Caco-2 (cell line): ENCODE measurements at regions of chr19 and their contacts with region 1.

Region 1: DNA sequence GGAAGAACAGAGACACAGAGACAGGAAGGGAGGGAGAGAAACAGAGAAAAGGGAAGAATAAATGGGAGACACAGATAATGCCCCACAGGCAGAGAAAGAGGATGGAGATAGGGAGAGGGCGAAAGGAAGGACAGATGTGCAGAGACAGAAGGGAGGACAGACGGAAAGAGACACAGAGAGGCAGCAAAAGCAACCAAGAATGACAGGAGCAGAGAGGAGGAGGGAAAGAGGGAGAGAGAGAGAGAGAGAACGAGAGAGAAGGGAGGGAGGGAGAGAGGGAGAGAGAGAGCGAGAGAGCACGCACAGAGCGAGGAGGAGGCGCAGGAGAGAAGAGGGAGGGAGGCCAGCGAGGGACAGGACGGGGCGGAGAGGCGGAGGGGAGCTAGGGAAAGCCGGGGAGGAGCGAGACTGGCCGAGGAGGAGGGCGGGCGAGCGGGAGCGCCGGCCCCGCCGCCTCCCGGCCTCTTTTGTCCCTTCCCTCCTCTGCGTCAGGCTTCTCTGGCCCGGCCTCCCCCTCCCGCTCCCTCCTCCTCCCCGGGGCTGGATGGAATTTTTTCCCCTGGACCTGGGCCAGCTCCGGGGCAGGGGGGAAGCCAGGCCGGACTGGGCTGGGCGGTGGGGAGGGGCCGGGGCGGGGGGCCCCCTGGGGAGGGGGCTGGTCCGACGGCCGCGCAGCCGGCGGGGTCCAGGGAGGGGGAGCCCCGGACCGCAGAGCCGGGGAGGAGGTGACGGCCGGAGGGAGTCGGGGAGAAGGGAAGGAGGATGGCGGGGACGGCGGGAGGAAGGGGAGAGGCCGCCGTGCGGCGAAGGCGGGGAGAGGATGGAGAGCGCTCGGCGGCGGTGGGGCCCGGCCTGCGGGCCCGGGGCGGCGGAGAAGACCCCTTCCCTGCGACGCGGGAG is 4.2 kb upstream of the SPACA6 start:
- DNase-seq: peak; percentile 74 to 77
- H3K4me3 ChIP-seq: peak overlapping the region; percentile 51
- H3K4me3 Mint-ChIP-seq: peak overlapping the region; percentile 84
- H3K27ac Mint-ChIP-seq: peak overlapping the region; percentile 16
- H3K4me1 ChIP-seq: peaks cover 20% of the 10 kb centered on the region
- H3K4me1 Mint-ChIP-seq: peaks cover 27% of the 10 kb centered on the region
- H3K27me3 ChIP-seq: no peaks in the 10 kb centered on the region
- H3K27me3 Mint-ChIP-seq: no peaks in the 10 kb centered on the region
- CTCF ChIP-seq: no peak

Region 2: DNA sequence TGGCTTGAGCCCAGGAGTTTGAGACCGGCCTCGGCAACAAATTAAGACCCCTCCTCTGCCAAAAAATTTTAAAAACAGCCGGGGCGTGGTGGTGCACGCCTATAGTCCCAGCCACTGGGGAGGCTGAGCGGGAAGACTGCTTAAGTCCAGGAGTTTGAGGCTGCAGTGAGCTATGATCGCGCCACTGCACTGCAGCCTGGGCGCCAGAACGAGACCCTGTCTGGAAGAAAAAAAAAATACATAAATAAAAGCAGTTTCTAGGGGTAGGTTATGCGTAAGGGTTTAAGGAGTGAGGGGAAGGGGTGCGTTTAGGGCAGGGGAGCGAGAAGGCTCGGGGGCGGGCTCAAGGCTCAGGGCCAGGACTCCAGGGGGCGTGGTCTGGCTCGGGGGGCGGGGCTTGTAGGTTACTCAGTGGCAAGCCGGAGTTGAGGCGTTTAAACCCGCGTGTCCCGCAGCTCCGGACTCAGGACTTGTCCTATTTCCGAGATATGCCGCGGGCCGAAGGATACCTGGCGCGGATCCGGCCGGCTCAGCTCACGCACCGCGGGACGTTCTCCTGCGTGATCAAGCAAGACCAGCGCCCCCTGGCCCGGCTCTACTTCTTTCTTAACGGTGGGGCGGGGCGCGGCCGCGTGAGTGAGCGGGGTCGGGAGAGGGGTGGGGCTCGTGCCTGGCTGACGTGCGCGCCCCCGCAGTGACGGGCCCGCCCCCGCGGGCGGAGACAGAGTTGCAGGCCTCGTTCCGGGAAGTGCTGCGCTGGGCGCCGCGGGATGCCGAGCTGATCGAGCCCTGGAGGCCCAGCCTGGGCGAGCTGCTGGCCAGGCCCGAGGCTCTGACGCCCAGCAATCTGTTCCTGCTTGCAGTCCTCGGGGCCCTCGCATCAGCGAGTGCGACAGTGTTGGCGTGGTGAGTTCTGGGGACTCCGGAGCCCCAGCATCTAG is 14.9 kb after region 1 on chr19:
- CTCF ChIA-PET with region 1: interaction called, 7 read pairs
- POLR2A ChIA-PET with region 1: no interaction called
- intact Hi-C with region 1: loop called (anchors 1 kb)
- DNase-seq: peak; percentile 96
- H3K4me3 ChIP-seq: peak overlapping the region; percentile 54
- H3K4me3 Mint-ChIP-seq: peak overlapping the region; percentile 85
- H3K27ac Mint-ChIP-seq: peak overlapping the region; percentile 90
- H3K4me1 ChIP-seq: peaks cover 12% of the 10 kb centered on the region; the same call in 1 of the 2 replicates
- H3K4me1 Mint-ChIP-seq: peaks cover 12% of the 10 kb centered on the region
- H3K27me3 ChIP-seq: no peaks in the 10 kb centered on the region
- H3K27me3 Mint-ChIP-seq: no peaks in the 10 kb centered on the region
- CTCF ChIP-seq: peak; percentile 45 to 54

Region 3: DNA sequence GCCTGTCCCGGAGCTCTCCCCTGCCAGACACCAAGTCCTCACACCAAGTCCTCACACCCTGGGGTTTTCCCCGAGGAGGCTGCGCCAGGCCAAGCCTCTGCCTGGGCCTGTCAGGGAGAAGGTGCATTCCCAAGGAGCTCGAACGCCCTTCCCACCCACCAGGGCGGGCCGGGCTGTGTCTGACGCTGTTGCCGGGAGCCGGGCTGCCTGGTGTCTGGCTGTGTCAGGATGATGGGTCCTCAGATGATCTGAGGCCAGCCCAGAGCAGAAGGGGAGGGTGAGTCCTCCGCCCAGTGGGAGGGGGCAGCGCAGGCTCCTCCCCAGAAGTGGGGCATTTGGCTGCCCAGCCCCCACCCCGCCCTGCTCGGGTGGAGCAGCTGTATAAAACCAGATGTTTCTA is 37.1 kb after region 1 on chr19:
- CTCF ChIA-PET with region 1: no interaction called
- POLR2A ChIA-PET with region 1: no interaction called
- intact Hi-C with region 1: no loop called
- DNase-seq: no peak
- H3K4me3 ChIP-seq: no peak overlapping the region
- H3K4me3 Mint-ChIP-seq: no peak overlapping the region
- H3K27ac Mint-ChIP-seq: no peak overlapping the region
- H3K4me1 ChIP-seq: no peaks in the 10 kb centered on the region
- H3K4me1 Mint-ChIP-seq: no peaks in the 10 kb centered on the region
- H3K27me3 ChIP-seq: no peaks in the 10 kb centered on the region
- H3K27me3 Mint-ChIP-seq: peaks cover 6% of the 10 kb centered on the region
- CTCF ChIP-seq: no peak

Region 4: DNA sequence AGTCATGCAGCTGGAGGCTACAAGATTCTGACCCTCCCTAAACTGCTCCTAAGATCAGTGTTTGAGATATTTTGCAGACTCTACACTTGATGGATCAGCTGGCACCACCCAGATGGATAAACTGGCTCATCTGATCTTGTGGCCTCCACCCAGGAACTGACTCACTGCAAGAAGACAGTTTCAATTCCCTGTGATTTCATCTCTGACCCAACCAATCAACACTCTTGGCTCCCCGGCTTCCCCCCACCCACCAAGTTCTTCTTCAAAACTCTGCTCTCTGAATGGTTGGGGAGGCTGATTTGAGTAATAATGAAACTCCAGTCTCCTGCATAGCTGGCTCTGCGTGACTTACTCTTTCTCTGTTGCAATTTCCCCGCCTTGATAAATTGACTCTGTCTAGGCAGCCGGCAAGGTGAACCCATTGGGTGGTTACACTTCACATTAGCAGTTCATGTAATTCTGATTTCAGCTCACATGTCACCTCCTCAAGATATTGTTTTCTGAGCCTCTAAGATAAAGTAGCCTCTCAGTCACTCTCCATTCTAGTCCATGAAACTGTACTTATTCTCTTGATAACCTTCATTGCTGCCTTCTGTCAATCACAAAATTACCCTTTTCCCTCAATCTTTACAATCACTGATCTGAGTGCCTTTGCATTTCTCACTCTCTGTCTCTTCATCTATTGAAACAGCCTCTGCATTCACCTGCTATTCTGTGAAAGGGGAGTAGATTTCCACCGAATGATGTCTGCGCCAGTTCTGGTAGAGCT is 96.2 kb after region 1 on chr19:
- CTCF ChIA-PET with region 1: no interaction called
- POLR2A ChIA-PET with region 1: no interaction called
- intact Hi-C with region 1: no loop called
- DNase-seq: no peak
- H3K4me3 ChIP-seq: no peak overlapping the region
- H3K4me3 Mint-ChIP-seq: no peak overlapping the region
- H3K27ac Mint-ChIP-seq: no peak overlapping the region
- H3K4me1 ChIP-seq: no peaks in the 10 kb centered on the region
- H3K4me1 Mint-ChIP-seq: no peaks in the 10 kb centered on the region
- H3K27me3 ChIP-seq: no peaks in the 10 kb centered on the region
- H3K27me3 Mint-ChIP-seq: no peaks in the 10 kb centered on the region
- CTCF ChIP-seq: no peak